PC-3 (cell line): ENCODE measurements at regions of chr17 and their contacts with region 1.

Region 1: DNA sequence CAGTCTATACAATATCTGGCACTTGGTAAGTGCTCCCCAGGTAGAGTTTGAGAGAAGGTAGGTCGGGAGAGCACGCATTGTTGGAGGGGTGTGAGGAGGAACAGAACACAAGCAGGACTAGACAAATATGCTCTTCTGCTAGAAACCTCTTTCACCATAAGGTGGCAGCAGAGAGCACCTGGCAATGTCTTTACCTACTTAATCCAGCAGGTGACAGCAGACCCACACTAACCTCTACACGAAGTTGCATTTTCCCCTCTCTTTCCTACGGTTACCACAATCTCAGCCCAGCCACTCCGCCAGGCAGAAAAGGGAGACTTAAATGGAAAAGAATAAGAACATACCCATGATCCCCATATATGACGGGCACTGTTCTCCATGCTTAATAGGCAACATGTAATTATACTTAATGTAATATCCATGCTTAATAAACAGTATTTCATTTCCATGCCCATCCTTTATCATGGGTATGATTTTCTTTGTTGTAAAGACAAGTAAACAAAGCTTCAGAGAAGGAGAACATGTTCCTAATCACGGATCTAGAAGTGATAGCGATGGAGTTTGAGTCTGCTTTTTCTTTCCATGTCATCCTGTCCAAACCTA is 55.1 kb upstream of the CCL2 start:
- DNase-seq: peak; percentile 77
- ATAC-seq: peak; percentile 56
- H3K4me3 ChIP-seq: no peak overlapping the region
- H3K27ac ChIP-seq: no peak overlapping the region
- H3K4me1 ChIP-seq: no peaks in the 10 kb centered on the region
- H3K27me3 ChIP-seq: no peaks in the 10 kb centered on the region
- CTCF ChIP-seq: peak; percentile 94

Region 2: DNA sequence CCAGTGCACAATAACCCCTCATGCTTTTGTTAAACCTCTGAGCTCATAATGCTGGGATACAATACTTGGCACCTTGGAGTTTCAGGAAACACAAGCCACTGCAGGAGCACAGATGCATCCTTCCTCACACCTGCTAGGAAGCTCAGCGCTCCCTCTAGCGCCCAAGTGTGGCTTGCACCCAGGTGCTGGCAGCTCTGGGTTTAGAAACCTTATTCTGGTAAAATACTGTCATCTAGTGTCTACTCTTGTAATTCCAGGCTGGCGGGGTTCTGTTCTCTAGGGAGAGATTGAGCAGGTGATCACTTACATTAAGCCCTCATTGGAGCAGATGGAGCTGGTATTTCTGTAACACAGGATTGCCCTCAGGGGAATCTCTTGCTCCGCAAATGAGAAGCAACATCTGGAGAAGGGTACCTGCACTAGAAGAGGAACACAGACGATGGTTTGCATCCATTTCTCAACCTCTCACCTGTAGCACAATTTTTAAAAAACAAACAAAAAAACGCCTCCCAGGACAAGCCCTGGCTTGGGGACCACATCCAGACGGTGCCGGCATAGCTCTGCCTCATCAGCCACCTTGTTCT is 161.5 kb after region 1 on chr17:
- CTCF ChIA-PET with region 1: interaction called, 3 read pairs
- POLR2A ChIA-PET with region 1: no interaction called
- intact Hi-C with region 1: loop called (anchors 1 kb)
- DNase-seq: peak; percentile 75
- ATAC-seq: peak; percentile 57
- H3K4me3 ChIP-seq: no peak overlapping the region
- H3K27ac ChIP-seq: no peak overlapping the region
- H3K4me1 ChIP-seq: no peaks in the 10 kb centered on the region
- H3K27me3 ChIP-seq: no peaks in the 10 kb centered on the region
- CTCF ChIP-seq: peak; percentile 83